ENCODE measurements at regions of chr1 and their contacts with region 1.

Region 1: GRCh38 chr1:59903141-59903754 is 23.3 kb downstream of the CYP2J2 start:
- DNase-seq: peak; percentile 45
- ATAC-seq: peak; percentile 47
- H3K4me3 Mint-ChIP-seq: no peak overlapping the region
- H3K27ac Mint-ChIP-seq: no peak overlapping the region
- H3K4me1 Mint-ChIP-seq: no peaks in the 10 kb centered on the region
- H3K27me3 Mint-ChIP-seq: no peaks in the 10 kb centered on the region

Region 2: GRCh38 chr1:59879574-59879973 is 23.7 kb before region 1 on chr1:
- CTCF ChIA-PET with region 1: interaction called, 11 read pairs
- POLR2A ChIA-PET with region 1: no interaction called
- DNase-seq: peak; percentile 74
- ATAC-seq: peak; percentile 75
- H3K4me3 Mint-ChIP-seq: no peak overlapping the region
- H3K27ac Mint-ChIP-seq: no peak overlapping the region
- H3K4me1 Mint-ChIP-seq: no peaks in the 10 kb centered on the region
- H3K27me3 Mint-ChIP-seq: no peaks in the 10 kb centered on the region

Region 3: DNA sequence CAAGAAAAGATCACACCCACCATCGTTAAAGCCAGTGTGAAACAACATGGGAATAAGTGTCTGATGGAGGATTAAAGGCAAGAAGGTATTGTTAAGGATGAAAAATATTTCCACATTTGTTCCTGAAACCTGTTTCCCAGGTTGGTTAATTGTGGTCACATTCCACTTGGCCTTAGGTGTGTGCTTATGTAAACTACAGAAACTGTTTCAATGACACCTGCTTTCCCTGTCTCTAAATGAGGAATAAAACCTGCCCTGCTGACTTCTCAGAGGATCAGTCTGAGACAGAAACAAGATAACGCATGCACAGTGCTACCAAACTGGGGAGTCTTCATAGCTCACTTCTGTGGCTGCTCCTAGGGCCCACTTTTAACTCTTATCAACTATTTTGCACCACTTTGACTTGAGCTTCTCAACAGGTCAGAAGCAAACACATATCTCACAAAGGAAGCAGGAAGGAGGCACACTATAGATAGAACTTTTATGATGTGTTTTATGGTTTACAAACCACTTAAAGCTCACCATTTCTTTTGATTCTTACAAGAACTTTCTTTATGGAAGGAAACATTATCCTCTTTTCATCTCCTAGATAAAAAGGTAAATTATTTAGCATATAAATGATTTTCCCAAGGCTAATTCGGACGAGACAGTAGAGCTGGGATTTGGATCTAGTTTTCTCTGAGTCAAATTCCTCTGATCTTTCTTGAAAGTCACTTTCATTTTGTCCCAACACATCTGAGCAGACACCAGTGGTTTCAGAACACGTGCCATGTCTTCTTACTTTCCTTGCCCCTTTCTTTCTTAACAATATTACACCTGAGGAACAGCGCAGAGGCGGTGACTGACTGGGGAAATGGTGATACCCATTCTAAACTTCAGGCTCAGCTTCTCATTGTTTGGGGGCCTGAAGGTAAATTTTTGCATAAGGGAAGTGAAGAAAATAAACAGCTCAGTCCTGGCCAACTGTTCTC is 10.1 kb before region 1 on chr1:
- CTCF ChIA-PET with region 1: interaction called, 13 read pairs
- POLR2A ChIA-PET with region 1: no interaction called
- DNase-seq: peak; percentile 21
- ATAC-seq: peak; percentile 33
- H3K4me3 Mint-ChIP-seq: peak overlapping the region; percentile 9
- H3K27ac Mint-ChIP-seq: peak overlapping the region; percentile 77
- H3K4me1 Mint-ChIP-seq: peaks cover 14% of the 10 kb centered on the region
- H3K27me3 Mint-ChIP-seq: no peaks in the 10 kb centered on the region

Region 4: DNA sequence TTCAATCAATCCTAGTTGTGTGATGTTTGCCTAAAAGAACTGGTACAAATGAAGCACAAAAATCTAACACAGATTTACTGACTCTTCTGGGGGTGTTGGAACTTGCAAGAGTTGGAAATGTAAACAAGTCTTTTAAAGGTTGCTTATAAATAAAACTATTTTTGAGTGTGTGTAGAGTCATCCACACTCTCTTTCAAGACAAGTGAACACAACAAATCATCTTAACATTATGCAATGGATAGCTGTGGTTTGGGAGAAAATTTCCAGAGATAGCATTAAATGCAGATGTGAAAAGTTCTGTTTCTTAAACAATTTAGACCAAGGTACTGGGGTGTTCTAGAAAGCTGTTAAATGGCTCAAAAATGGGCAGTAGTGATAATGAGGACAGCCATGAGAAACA is 141.6 kb after region 1 on chr1:
- CTCF ChIA-PET with region 1: no interaction called
- POLR2A ChIA-PET with region 1: no interaction called
- DNase-seq: no peak
- ATAC-seq: no peak
- H3K4me3 Mint-ChIP-seq: no peak overlapping the region
- H3K27ac Mint-ChIP-seq: no peak overlapping the region
- H3K4me1 Mint-ChIP-seq: no peaks in the 10 kb centered on the region
- H3K27me3 Mint-ChIP-seq: no peaks in the 10 kb centered on the region

Region 5: DNA sequence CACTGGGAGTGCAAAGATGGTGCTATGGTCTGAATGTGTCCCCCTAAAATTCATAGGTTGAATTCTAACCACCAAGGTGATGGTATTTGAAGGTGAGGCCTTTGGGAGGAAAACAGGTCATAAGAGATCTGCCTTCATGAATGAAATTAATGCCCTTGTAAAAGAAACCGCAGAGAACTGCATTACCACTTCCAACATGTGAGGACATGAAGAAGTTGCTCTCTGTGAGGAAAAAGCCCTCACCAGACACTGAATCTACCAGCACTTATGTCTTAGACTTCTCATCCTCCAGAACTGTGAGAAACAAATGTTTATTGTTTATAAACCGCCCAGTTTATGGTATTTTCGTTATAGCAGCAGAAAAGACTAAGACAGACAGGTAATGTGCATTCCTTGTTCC is 395.0 kb after region 1 on chr1:
- CTCF ChIA-PET with region 1: no interaction called
- POLR2A ChIA-PET with region 1: no interaction called
- DNase-seq: no peak
- ATAC-seq: no peak
- H3K4me3 Mint-ChIP-seq: no peak overlapping the region
- H3K27ac Mint-ChIP-seq: no peak overlapping the region
- H3K4me1 Mint-ChIP-seq: no peaks in the 10 kb centered on the region
- H3K27me3 Mint-ChIP-seq: no peaks in the 10 kb centered on the region